Esophagus muscularis mucosa (tissue), 4 donors: ENCODE measurements at regions of chr17 and their contacts with region 1.

Region 1: GRCh38 chr17:47229535-47230443 is 20.6 kb downstream of the MYL4 start:
- DNase-seq: peak; percentile 97
- H3K4me3 ChIP-seq: peak overlapping the region; percentile 22 to 36 (median 30)
- H3K27ac ChIP-seq: peak overlapping the region; percentile 14 to 59 (median 54)
- H3K4me1 ChIP-seq: peaks cover 21 to 33% (median 32%) of the 10 kb centered on the region in 4 donors
- H3K27me3 ChIP-seq: no peaks in the 10 kb centered on the region
- CTCF ChIP-seq: peak; percentile 99 to 100 (median 99)
- EP300 ChIP-seq: no peak
- POLR2A ChIP-seq: no peak

Region 2: GRCh38 chr17:46841561-46842379 is 388.0 kb before region 1 on chr17:
- intact Hi-C with region 1: no loop called
- DNase-seq: no peak
- H3K4me3 ChIP-seq: peak overlapping the region in 2 of 4 donors; percentile 8 to 25
- H3K27ac ChIP-seq: no peak overlapping the region
- H3K4me1 ChIP-seq: peaks cover 0 to 8% (median 7%) of the 10 kb centered on the region in 4 donors
- H3K27me3 ChIP-seq: peaks cover 0 to 65% (median 14%) of the 10 kb centered on the region in 4 donors
- CTCF ChIP-seq: peak; percentile 47 to 65 (median 56)
- EP300 ChIP-seq: no peak
- POLR2A ChIP-seq: no peak

Region 3: GRCh38 chr17:47172698-47173565 is 56.9 kb before region 1 on chr17:
- intact Hi-C with region 1: no loop called
- DNase-seq: no peak
- H3K4me3 ChIP-seq: no peak overlapping the region
- H3K27ac ChIP-seq: no peak overlapping the region
- H3K4me1 ChIP-seq: peaks cover 2 to 36% (median 30%) of the 10 kb centered on the region in 4 donors
- H3K27me3 ChIP-seq: no peaks in the 10 kb centered on the region
- CTCF ChIP-seq: no peak
- EP300 ChIP-seq: no peak
- POLR2A ChIP-seq: no peak

Region 4: DNA sequence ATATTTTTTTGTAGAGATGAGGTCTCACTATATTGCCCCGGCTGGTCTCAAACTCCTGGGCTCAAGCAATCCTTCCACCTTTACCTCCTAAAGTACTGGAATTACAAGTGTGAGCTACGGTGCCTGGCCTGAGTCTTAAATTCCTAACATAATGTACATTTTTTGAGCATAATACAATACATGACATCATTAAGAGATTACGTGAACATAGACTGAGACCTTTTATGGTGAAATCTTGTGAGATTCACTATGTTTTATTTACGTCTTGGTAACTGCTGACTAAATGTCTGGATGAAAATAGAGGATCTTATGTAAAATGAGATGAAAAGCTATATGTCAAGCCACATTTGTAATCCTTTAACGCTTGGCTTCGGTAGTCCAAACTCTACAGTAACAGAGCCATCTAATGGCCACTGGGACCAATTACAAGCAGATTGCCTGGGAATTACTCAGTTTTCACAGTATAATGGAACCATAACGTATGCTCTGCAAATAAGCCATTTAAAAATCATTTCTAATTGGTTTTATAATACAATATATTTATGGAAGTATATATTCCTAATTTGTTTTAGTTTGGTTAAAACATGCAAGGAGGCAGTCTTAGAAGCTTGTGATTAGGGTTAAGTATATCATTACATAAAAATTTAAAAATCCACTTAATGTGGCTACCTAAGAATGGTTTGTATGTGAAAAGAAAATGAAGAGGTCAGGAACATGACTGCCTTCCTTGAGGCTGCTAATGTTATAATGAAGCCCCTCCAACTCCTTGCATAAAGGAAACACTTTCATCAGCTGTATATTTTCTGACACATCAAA is 85.9 kb after region 1 on chr17:
- intact Hi-C with region 1: loop called (anchors 1 kb)
- DNase-seq: peak; percentile 42
- H3K4me3 ChIP-seq: no peak overlapping the region
- H3K27ac ChIP-seq: peak overlapping the region; percentile 71 to 76 (median 73)
- H3K4me1 ChIP-seq: peaks cover 5 to 38% (median 34%) of the 10 kb centered on the region in 4 donors
- H3K27me3 ChIP-seq: no peaks in the 10 kb centered on the region
- CTCF ChIP-seq: peak; percentile 80 to 96 (median 83)
- EP300 ChIP-seq: no peak
- POLR2A ChIP-seq: no peak

Region 5: GRCh38 chr17:47423406-47424295 is 193.9 kb after region 1 on chr17:
- intact Hi-C with region 1: no loop called
- DNase-seq: no peak
- H3K4me3 ChIP-seq: peak overlapping the region; percentile 53 to 58 (median 56)
- H3K27ac ChIP-seq: no peak overlapping the region
- H3K4me1 ChIP-seq: peaks cover 4 to 15% (median 14%) of the 10 kb centered on the region in 4 donors
- H3K27me3 ChIP-seq: peaks cover 5 to 16% (median 13%) of the 10 kb centered on the region in 4 donors
- CTCF ChIP-seq: no peak
- EP300 ChIP-seq: no peak
- POLR2A ChIP-seq: no peak